GM10248 (cell line): ENCODE measurements at regions of chr19 and their contacts with region 1.

Region 1: DNA sequence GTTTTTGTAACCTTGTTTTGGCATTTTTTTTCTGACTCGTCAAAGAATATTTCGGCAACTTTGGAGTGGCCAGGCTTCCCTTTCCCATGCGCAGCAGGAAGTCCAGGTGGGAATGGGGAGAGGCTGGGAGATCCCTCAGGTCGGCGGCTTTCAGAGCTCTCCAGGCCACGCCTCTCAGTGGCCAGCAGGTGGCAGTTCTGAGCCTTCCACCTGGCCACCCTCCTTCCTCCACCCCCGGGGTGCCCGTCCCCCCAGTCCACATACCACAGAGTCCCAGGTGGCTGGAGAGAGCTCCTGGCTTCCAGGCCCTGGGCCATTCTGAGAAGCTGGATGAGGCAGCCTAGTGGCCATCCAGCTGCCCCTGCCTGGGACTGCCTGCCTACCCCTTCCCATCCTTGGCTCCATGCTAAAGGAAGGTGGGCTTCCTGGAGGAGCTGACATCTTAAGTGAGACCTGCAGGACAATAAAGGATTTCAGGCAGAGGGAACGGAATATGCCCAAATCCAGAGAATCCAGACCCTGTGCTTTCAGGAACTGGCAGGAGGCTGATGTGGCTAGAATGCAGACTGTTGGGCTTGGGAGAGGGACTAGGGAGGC is 46.3 kb downstream of the CCNE1 start:
- DNase-seq: peak; percentile 72
- CTCF ChIP-seq: peak; percentile 76

Region 2: DNA sequence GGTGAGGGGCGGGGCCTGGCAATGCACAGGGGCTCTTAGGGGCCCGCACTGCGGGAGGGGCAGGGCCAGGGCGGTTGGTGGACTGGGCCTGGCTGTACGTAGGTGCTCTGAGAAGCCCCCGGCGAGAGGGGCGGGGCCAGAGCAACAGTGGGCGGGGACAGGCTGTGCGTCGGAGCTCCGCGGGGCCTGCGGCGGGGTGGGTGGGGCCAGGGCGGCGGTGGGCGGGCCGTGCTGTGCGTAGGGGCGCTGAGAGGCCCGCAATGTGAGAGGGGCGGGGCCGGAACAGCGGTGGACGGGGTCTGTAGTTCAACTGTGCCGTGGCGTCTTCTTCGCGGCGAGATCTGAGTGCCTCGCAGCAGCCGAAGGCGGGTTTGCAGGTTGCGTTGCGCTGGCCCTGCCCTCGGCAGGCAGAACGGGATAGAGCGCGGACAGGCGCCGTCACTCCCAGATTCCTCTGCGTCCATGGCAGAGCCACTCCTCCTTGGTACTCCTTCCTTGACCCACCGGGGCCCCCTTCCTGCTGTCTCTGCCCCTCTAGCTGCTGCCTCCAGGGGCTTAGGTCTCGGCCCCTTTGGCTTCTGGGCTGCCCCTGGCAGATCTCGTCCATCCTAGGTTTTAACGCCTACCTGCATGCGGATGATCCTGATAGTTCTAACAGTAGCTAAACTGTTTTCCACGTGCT is 13.1 kb before region 1 on chr19:
- CTCF ChIA-PET with region 1: interaction called, 18 read pairs
- POLR2A ChIA-PET with region 1: interaction called, 3 read pairs
- DNase-seq: peak; percentile 95
- CTCF ChIP-seq: peak; percentile 1

Region 3: GRCh38 chr19:29941828-29942403 is 83.8 kb after region 1 on chr19 and contains the start of gene URI1:
- CTCF ChIA-PET with region 1: no interaction called
- POLR2A ChIA-PET with region 1: no interaction called
- DNase-seq: peak; percentile 96
- CTCF ChIP-seq: no peak